ENCODE measurements at regions of chr1 and their contacts with region 1.

Region 1: GRCh38 chr1:165630629-165631341 is at the start of gene MGST3:
- DNase-seq: peak; percentile 86 to 94 (median 92)
- H3K4me3 ChIP-seq: peak within 1 kb of the TSS; percentile 69 to 99 (median 95)
- H3K27ac ChIP-seq: peak within 1 kb of the TSS; percentile 53 to 97 (median 90)
- H3K27me3 ChIP-seq: no peaks in the 10 kb centered on the region
- CTCF ChIP-seq: peak in 23 of 56 donors; percentile 7 to 54 (median 31)
- total RNA-seq, gene MGST3: 157 to 321 (median 258) TPM

Region 2: DNA sequence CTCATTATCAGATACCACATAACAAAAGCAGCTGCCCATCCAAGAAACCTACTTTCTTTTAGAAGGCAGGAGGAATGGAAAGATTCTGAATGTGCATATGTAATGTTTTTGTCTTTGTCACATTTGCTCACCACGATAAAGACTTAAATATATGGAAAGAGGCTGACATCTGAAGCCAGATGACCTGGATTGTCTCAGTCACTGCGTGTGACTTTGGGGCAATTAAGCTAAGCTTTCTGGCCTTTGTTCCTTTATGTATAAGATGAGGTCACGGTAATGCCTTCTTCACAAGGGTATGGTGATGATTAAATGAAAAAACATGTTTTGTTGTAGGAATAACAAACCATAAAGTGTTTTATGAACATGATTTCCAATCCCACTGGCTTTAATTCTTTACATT is 44.4 kb before region 1 on chr1:
- intact Hi-C with region 1: no loop called
- DNase-seq: no peak
- H3K4me3 ChIP-seq: no peak overlapping the region
- H3K27ac ChIP-seq: no peak overlapping the region
- H3K27me3 ChIP-seq: peaks cover 0 to 6% (median 0%) of the 10 kb centered on the region in 45 donors
- CTCF ChIP-seq: no peak

Region 3: DNA sequence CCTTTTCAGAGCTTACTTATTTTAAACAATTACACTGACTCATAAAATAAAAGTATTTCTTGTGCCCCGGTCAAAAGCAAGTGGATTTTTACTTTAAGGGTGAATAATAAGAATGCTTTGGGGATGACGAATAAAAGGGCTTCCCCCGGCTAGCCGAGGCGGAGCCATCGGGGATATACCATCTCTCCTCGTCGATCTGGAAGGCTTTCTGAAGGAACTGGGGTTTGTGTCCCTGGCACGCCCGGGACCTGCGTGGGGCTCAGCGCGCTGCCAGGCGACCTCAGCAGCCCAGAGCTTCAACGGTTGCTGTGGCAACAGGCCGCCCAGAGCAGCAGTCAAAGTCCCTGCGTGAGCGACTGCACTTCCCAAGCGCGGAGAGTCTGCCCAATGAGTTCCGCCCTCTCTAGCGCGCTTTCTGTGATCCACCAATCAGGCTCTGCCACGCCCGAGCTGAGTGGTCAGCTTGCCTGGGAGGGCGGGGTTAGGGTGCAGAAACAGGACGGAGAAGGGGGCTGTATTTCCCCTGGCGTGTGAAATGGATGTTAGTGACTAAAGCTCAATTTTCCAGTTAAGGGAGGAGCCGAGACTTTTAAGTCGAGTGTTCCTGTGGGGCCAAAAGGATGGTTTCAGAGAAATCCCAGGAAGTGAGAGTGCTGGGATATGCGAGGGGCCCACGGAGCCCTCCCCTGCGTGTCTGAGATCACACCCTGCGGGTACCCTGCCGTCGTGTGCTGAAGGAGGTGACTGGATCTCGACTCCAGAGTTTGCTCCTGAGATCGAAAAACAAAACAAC is 32.7 kb before region 1 on chr1:
- intact Hi-C with region 1: loop called in 1 of 2 experiments (anchors 2 kb)
- DNase-seq: peak; percentile 89 to 99 (median 96)
- H3K4me3 ChIP-seq: peak overlapping the region; percentile 41 to 96 (median 70)
- H3K27ac ChIP-seq: peak overlapping the region in 33 of 59 donors; percentile 4 to 84 (median 55)
- H3K27me3 ChIP-seq: peaks cover 0 to 18% (median 3%) of the 10 kb centered on the region in 45 donors
- CTCF ChIP-seq: peak in 20 of 56 donors; percentile 5 to 52 (median 28)

Region 4: DNA sequence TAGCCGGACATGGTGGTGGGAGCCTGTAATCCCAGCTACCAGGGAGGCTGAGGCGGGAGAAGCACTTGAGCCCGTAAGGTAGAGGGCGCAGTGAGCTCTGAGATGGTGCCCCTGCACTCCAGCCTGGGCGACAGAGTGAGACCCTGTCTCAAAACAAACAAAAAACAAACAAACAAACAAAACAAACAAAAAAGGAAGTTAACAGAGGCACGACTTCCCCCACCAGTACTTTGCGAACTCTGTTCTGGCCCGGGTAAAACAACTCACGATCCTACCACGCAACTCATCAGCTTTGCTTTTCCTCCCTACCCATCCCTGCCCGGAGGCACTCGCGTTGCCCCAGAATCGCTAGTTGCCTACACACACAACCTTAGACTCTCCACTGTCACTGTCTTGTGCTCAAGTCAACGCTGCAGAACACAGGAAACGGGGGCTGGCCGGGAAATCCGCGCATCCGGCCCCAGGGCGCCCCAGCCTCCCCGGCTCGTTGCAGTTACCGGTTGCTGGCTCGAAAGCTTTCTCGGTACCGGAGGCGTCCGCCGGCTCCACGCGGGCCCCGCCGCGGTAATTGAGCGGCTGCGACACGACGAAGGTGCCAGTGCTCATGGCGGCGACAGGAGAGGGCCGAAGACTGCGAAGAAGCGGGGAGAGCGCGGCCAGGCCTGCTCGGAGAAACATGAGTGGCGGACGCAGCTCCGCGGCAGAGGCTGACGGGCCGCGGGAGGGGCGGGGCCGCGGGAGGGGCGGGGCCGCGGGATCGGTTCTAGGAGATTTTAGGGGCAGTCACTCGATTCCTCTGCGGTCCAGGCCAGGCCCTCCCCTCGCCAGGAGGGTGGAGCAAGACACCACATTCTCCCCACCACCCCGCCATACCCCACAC is 67.3 kb after region 1 on chr1 and contains the start of gene ALDH9A1:
- intact Hi-C with region 1: loop called (anchors 2 to 5 kb)
- DNase-seq: peak; percentile 70 to 94 (median 87)
- H3K4me3 ChIP-seq: peak within 1 kb of the TSS; percentile 53 to 98 (median 84)
- H3K27ac ChIP-seq: peak within 1 kb of the TSS; percentile 63 to 99 (median 91)
- H3K27me3 ChIP-seq: no peaks in the 10 kb centered on the region
- CTCF ChIP-seq: peak in 54 of 56 donors; percentile 4 to 66 (median 44)
- total RNA-seq, gene ALDH9A1: 29.9 to 85.0 (median 47.9) TPM

Region 5: DNA sequence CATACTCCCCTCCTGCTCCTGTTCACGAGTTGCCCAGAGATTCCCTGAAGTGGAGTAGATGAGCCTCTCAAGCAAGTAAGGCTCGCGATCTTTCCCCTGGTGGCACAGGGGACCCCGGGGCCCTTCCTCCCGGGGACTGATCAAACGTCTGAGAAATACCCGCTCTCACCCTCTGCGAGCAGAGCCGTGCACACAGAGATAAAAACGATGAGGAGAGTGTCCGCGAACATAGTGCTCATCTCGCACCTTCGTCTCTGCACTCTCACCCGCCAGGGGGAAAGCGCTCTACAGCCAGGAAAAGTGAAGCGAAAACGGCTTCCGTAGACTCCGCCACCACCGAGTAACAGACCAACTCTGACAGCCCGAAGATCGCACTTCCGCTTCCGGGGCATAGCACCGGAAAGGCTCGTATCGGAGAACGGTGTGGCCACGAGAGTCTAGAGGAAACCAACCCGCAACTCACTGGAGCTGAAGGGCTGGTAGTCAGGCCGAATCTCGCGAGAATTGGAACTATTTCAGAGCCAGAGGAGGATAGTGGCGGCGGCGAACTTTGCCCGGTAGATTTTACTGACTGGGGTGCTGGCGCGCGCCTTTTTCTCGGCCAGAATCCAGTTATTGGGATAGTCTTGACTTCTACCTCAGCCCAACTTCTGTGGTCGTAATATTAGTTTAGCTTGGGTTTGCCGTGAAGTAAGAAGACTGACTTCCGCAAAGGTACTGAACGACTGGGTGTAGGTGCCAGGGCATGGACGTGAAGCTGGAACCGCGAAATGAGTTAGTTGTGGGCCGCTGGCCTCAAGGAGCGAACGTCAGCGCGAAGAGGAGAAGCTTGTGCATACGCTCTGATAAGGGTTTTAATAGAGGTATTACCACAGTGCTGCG is 138.0 kb after region 1 on chr1 and contains the start of gene TMCO1:
- intact Hi-C with region 1: loop called in 1 of 2 experiments (anchors 5 kb)
- DNase-seq: peak; percentile 96 to 100 (median 98)
- H3K4me3 ChIP-seq: peak within 1 kb of the TSS; percentile 50 to 97 (median 83)
- H3K27ac ChIP-seq: peak within 1 kb of the TSS in 55 of 59 donors; percentile 4 to 90 (median 72)
- H3K27me3 ChIP-seq: no peaks in the 10 kb centered on the region
- CTCF ChIP-seq: peak in 44 of 56 donors; percentile 11 to 60 (median 33)
- total RNA-seq, gene TMCO1: 37.8 to 74.4 (median 56.4) TPM

Region 6: GRCh38 chr1:165827268-165828102 is 196.7 kb after region 1 on chr1 and contains the start of gene UCK2:
- intact Hi-C with region 1: loop called (anchors 5 kb)
- DNase-seq: peak; percentile 54 to 84 (median 71)
- H3K4me3 ChIP-seq: peak within 1 kb of the TSS; percentile 59 to 97 (median 83)
- H3K27ac ChIP-seq: peak within 1 kb of the TSS; percentile 40 to 97 (median 91)
- H3K27me3 ChIP-seq: no peaks in the 10 kb centered on the region
- CTCF ChIP-seq: peak in 26 of 56 donors; percentile 4 to 37 (median 18)
- total RNA-seq, gene UCK2: 19.0 to 35.8 (median 26.0) TPM

Region 7: DNA sequence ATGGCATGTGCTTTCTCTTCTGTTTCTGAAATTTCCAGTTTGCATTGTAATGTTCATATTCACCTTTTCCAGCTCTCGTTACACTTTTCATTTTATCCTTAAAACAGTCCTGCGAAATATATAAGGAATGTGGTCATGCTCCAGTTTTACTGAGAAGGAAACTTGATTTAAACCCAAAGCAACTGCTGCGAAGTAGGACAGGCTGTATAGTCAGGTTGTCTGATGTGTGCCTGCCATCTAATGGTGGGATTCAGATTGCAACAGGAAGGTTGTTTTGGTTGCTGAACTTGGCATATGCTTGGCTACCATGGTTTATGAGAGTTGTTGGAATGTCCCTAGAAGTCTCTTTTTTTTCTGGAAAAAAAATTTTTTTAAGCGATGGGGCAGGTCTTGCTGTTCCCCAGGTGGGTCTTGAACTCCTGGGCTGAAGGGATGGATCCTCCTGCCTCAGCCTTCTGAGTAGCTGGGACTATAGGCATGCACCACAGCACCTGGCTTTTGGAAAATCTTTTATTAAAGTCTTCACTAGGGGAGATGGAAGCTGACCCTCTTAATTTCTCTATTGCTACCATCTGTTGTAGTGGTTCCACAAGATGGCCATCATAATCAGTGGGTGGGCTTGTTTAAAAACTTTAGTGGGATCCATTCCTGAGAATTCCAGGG is 283.5 kb after region 1 on chr1:
- intact Hi-C with region 1: loop called in 1 of 2 experiments (anchors 10 kb)
- DNase-seq: peak in 5 of 10 donors; percentile 54 to 77 (median 68)
- H3K4me3 ChIP-seq: no peak overlapping the region
- H3K27ac ChIP-seq: no peak overlapping the region
- H3K27me3 ChIP-seq: no peaks in the 10 kb centered on the region
- CTCF ChIP-seq: peak; percentile 64 to 98 (median 90)

Measured in dorsolateral prefrontal cortex (tissue), 120 donors.